ENCODE measurements at regions of chr19 and their contacts with region 1.

Region 1: GRCh38 chr19:29694669-29695627 is 20.1 kb downstream of the C19orf12 start:
- DNase-seq: peak; percentile 88
- ATAC-seq: peak; percentile 98
- H3K4me3 Mint-ChIP-seq: no peak overlapping the region
- H3K27ac Mint-ChIP-seq: peak overlapping the region; percentile 77
- H3K4me1 Mint-ChIP-seq: peaks cover 20% of the 10 kb centered on the region
- H3K27me3 Mint-ChIP-seq: no peaks in the 10 kb centered on the region

Region 2: DNA sequence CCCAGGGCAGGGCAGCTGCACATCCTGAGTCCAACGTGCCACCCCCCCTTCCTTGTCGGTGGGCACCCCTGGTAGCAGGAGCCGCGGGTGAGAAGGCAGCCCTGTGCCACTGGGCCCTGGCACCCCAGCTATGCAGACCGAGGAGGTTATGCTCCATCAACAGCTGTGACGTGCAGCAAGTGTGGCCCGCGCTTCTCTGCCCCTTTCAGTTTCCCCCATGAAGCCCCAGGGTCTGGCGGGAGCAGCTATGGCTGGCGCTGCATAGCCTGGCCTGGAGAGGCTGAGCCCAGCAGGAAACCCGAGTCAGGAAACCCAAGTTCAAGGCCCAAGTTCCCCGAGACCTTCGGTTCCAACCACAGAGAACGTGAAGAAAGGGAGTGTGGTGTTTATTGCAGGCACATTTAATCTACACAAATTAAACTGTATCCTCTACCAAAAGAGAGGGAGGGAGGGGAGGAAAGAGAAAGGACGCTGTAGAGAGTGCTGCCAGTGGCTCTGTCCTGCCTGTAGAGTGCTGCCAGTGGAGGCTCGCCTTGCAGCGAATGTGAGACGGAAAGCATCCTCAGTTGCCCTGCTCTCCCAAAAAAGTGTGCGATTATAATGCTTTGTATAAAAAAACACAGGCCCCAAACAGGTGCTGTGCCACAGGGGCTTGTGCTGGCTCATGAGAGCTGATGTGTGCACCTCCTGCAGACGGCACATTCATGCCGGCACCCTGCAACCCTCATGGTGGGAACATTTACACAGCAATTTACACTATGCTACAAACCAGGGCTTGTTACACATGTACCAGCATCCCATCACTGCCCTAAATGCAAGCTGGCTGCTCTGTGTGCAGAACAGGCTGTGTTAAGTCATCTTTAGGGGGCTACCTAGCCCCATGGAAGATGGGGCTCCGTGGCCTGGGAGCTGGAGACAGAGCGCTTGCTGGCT is 72.5 kb before region 1 on chr19:
- CTCF ChIA-PET with region 1: interaction called, 14 read pairs
- POLR2A ChIA-PET with region 1: no interaction called
- DNase-seq: peak; percentile 60
- ATAC-seq: peak; percentile 71
- H3K4me3 Mint-ChIP-seq: peak overlapping the region; percentile 81
- H3K27ac Mint-ChIP-seq: peak overlapping the region; percentile 95
- H3K4me1 Mint-ChIP-seq: peaks cover 67% of the 10 kb centered on the region
- H3K27me3 Mint-ChIP-seq: peaks cover 3% of the 10 kb centered on the region

Region 3: DNA sequence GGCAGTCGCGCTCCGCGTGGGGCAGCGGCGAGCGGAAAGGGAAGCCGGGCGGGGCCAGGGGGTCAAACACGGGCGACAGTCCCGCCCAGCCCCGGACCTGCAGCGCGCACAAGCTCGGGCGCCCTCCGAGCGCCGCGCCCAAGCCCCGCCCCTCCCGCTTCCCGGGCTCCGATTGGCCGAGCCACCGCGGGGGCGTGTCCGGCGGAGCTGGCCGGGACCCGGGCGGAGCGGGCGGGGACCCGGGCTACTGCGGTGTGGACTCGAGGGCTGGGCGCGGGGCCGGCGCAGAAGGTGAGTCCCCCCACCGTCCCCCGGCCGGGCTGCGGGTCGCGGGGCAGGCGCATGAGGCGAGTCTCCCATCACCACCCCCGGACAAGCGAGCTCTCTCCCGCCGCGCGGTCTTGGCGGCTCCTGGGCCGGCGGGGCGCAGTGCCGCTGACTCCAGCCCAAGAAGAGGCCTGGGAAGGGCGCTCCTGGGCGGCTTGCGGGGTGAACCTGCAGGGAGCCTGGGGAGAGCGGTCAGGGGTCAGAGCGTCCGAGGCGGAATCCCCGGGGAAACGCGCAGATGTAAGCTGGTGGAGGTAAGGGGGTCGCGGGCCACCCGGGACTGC is 29.6 kb before region 1 on chr19 and contains the start of gene PLEKHF1:
- CTCF ChIA-PET with region 1: interaction called, 18 read pairs
- POLR2A ChIA-PET with region 1: no interaction called
- DNase-seq: peak; percentile 89
- ATAC-seq: peak; percentile 88
- H3K4me3 Mint-ChIP-seq: peak within 1 kb of the TSS; percentile 86
- H3K27ac Mint-ChIP-seq: peak within 1 kb of the TSS; percentile 90
- H3K4me1 Mint-ChIP-seq: peaks cover 68% of the 10 kb centered on the region
- H3K27me3 Mint-ChIP-seq: no peaks in the 10 kb centered on the region
- total RNA-seq, gene PLEKHF1: 46.0 to 47.7 TPM

Region 4: DNA sequence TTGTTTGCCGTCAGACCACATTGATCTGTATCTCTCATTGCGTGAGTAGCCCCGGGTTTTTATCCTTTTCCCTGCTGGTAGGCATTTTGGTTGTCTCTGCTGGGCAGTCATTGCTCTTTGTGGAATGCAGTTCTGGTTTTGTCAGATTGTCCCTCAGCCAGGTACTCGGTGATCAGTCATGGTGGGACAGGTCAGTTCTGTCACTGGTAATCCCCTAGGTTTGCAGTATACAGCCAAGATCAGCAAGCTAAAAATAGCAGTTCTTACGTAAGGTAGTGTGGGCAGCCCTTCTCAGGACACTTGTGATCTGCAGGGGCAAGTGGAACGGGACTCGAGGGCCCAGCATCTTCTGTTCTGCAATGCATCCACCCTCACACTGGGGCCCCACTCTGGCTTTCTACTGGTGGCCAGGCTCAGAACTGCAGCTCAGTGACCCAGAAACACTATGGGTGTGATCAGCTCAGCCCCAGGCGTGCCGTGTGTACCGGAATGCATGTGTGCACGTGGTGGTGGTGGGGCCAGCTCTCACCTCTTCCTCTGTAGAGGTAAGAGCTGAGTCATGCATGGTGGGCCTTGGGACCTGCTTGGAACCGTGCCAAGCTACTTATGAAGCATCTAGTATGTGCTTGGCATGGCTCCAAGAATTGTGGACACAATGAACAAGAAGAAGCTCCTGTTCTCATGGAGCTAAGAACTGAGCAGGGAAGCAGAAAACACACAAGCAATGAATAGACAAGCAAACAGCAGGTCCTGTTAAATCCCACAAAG is 23.4 kb before region 1 on chr19:
- CTCF ChIA-PET with region 1: interaction called, 30 read pairs
- POLR2A ChIA-PET with region 1: interaction called, 4 read pairs
- DNase-seq: peak; percentile 92
- ATAC-seq: peak; percentile 63
- H3K4me3 Mint-ChIP-seq: peak overlapping the region; percentile 58
- H3K27ac Mint-ChIP-seq: peak overlapping the region; percentile 87
- H3K4me1 Mint-ChIP-seq: peaks cover 91% of the 10 kb centered on the region
- H3K27me3 Mint-ChIP-seq: no peaks in the 10 kb centered on the region

Region 5: DNA sequence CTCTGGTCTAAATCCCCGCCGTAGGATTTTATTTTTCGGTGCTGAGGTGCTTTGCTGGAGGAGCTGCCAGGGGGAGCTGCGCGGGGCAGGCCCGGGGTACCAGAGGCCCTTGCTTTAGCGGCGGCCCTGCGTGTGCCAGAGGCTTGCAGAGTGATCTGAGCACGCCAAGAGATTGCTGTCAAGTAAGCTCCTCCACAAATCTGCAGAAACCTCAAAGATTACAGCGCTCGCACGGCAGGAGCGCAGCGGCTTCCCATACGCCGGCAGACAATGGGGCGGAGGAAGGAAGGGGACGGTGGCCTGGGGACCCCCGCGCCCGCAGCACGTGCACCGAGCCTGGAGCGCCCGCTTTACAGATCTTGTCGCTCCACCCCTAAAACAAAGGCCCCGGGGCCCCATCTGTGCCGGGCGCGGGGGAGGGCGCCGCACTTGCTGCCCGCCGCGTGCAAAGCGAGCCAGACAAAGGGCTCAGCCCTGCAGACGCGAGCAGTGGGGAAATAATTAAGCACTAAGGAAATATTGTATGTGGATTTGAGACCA is 29.2 kb after region 1 on chr19:
- CTCF ChIA-PET with region 1: interaction called, 16 read pairs
- POLR2A ChIA-PET with region 1: no interaction called
- DNase-seq: peak; percentile 55
- ATAC-seq: peak; percentile 82
- H3K4me3 Mint-ChIP-seq: peak overlapping the region; percentile 59
- H3K27ac Mint-ChIP-seq: no peak overlapping the region
- H3K4me1 Mint-ChIP-seq: peaks cover 18% of the 10 kb centered on the region
- H3K27me3 Mint-ChIP-seq: peaks cover 26% of the 10 kb centered on the region

Measured in activated CD8-positive, alpha-beta T cell treated with anti-CD3 and anti-CD28 coated beads, Interleukin-2, amount 10 ng/mL, durations not matched to agents 7 days and 5 days (primary cell).